Activated CD8-positive, alpha-beta T cell treated with anti-CD3 and anti-CD28 coated beads for 36 hours (primary cell): ENCODE measurements at regions of chr2 and their contacts with region 1.

Region 1: DNA sequence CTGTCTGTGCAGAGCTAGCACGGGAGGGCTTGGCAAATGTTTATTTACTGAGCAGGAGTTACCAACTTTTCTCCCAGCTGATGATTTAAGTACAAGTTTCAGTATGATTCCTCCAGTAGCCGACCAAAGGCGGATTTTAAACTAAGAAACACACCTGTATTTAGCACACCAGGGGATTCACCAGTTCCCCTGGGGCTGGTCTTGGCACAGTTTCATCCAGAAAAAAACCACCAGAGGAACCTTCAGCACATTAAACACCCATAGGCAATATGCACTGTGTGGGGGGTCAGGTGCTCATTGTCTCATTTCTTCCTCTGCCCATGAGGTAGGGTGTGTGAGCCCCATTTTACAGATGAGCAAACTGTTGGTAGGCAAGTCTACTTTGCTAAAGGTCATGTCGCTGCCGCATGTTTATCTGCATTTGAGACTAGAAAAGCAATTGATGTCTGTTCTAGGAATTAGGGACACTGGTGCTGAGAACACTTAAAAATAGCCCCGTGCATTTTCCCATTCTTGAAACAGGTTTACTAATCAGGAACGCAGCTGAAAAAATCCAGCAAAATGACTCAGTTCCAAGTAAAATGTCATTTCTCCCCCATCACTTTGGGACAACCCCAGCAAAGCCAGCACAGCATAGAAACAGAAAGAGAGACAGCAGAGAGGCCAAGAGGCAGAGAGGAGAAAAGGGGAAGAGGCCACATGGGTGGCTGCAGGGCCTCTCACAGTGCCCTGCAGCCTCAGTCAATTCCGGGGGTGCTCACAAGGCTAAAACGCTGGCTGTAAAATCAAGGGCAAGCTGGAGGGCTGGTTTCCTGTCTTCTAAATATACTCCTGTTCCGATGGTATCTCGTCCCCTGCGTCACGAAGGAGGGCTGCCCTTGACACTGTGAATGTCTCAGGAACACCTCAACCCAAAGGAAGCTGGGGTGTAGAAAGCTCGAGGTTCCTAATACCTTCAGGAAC is 166.8 kb upstream of the ID2 start:
- DNase-seq: peak; percentile 87
- ATAC-seq: peak; percentile 88
- H3K4me3 Mint-ChIP-seq: peak overlapping the region; percentile 38
- H3K27ac Mint-ChIP-seq: peak overlapping the region; percentile 96
- H3K4me1 Mint-ChIP-seq: peaks cover 65% of the 10 kb centered on the region
- H3K27me3 Mint-ChIP-seq: no peaks in the 10 kb centered on the region
- CTCF ChIP-seq: no peak

Region 2: GRCh38 chr2:8408560-8409460 is 106.3 kb before region 1 on chr2:
- CTCF ChIA-PET with region 1: no interaction called
- POLR2A ChIA-PET with region 1: no interaction called
- intact Hi-C with region 1: loop called (anchors 1 kb)
- DNase-seq: peak; percentile 82
- ATAC-seq: peak; percentile 95
- H3K4me3 Mint-ChIP-seq: no peak overlapping the region
- H3K27ac Mint-ChIP-seq: peak overlapping the region; percentile 66
- H3K4me1 Mint-ChIP-seq: peaks cover 22% of the 10 kb centered on the region
- H3K27me3 Mint-ChIP-seq: peaks cover 1% of the 10 kb centered on the region
- CTCF ChIP-seq: no peak

Region 3: DNA sequence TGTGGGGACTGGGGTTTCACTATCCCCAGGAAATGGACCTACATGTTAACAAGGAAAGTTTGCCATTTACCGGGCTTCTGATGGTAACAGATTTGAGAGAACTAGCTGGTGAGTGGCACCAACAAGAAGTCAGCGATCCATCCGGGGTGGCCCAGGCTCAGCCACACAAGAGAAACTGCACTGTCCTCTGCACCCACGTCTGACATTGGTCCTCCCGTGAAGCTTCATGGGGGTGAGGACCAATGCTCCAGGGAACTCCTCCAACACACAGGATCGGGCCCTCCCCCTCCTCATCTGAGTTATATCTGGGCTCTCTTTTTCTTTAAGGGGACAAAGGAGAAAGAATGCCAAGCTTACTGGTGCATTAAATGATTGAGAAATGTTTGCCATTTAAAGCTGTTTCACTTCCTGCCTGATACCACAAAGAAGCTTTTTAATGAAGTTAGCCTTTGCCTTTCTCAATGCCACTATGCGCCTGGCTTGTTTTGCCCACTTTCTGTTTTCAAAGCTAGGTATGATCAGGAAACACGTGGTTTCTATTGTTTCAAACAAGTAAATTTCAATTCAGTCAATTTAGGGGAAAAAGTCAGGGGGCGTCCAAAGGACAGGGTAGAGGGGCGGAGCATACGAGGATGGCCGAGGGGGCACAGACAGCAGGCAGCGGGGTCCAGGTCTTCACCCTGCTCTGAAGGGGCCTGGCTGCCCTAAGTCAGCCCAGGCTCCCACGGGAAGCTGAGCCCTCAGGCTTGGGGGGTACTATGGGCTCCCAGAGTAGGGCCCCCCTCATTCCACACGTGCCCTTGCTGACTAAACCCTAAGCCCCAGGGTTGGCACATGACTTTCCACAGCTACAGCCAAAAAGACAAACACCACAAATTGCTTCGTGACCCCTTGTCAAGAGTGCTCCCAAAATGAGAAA is 37.3 kb before region 1 on chr2:
- CTCF ChIA-PET with region 1: interaction called, 4 read pairs
- POLR2A ChIA-PET with region 1: interaction called, 5 read pairs
- intact Hi-C with region 1: loop called (anchors 5 kb)
- DNase-seq: peak; percentile 68
- ATAC-seq: peak; percentile 44
- H3K4me3 Mint-ChIP-seq: peak overlapping the region; percentile 8
- H3K27ac Mint-ChIP-seq: peak overlapping the region; percentile 78
- H3K4me1 Mint-ChIP-seq: peaks cover 86% of the 10 kb centered on the region
- H3K27me3 Mint-ChIP-seq: peaks cover 6% of the 10 kb centered on the region
- CTCF ChIP-seq: no peak

Region 4: GRCh38 chr2:8488001-8488738 is 26.9 kb before region 1 on chr2:
- CTCF ChIA-PET with region 1: no interaction called
- POLR2A ChIA-PET with region 1: interaction called, 27 read pairs
- intact Hi-C with region 1: no loop called
- DNase-seq: peak; percentile 89
- ATAC-seq: peak; percentile 84
- H3K4me3 Mint-ChIP-seq: peak overlapping the region; percentile 66
- H3K27ac Mint-ChIP-seq: peak overlapping the region; percentile 79
- H3K4me1 Mint-ChIP-seq: peaks cover 47% of the 10 kb centered on the region
- H3K27me3 Mint-ChIP-seq: peaks cover 6% of the 10 kb centered on the region
- CTCF ChIP-seq: no peak